Posterior cingulate gyrus (tissue), 11 donors: ENCODE measurements at regions of chr13 and their contacts with region 1.

Region 1: GRCh38 chr13:52128714-52129700 is at the start of gene NEK5:
- DNase-seq: peak; percentile 21 to 93 (median 55)

Region 2: GRCh38 chr13:51814825-51815650 is 314.0 kb before region 1 on chr13:
- intact Hi-C with region 1: loop called (anchors 5 kb)
- DNase-seq: peak in 6 of 10 donors; percentile 23 to 81 (median 64)

Region 3: GRCh38 chr13:51844862-51845573 is 284.0 kb before region 1 on chr13 and contains the start of gene TMEM272:
- intact Hi-C with region 1: loop called (anchors 5 kb)
- DNase-seq: peak in 9 of 10 donors; percentile 46 to 93 (median 65)

Region 4: DNA sequence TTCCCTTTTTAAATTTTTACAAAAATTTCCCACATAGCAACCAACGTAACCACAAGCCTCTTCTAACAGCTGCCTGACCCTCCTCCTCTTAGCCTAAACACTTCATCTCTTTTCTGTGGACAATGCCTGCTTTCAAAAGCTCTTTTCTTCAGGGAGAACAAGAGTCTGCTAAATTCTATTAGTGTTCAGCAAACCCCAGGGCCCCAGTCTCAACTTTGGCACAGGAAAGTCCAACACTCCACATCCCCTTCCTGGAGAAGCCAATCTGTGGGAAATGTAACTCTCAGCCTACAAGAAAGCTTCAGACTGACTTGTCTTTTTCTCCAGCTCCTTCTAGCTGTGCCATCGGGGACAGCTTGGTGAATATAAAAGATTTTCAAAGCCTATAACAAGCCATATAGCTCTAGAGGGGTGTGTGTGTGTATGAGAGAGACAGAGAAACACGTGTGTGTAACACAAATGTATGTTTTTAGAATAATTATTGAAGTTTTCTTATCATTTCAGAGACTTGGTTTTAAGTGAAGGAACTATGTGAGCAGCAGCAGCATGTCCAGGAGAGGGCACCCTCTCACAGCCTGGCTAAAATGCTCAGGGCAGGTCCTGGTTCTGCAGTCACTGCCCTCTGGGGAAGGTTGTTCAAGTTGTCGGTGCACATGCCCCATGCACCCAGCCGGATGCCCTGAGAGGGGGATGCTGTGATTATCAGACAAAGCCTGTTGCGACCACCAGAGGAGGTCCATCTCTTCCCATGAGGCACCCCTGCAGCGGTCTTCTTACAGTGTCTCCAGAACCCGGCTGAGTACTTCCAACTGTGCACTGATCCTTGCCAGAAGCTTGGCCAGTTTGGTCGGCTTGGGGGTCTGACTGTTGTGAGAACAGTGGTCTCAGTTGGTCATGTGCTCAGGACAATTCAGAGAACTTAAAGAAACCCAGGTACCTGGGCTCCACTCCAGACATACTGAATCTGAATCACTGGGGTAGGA is 232.8 kb before region 1 on chr13:
- intact Hi-C with region 1: loop called (anchors 2 kb)
- DNase-seq: peak in 8 of 10 donors; percentile 43 to 94 (median 57)

Region 5: GRCh38 chr13:52001120-52001731 is 127.8 kb before region 1 on chr13:
- intact Hi-C with region 1: loop called (anchors 1 kb)
- DNase-seq: no peak

Region 6: DNA sequence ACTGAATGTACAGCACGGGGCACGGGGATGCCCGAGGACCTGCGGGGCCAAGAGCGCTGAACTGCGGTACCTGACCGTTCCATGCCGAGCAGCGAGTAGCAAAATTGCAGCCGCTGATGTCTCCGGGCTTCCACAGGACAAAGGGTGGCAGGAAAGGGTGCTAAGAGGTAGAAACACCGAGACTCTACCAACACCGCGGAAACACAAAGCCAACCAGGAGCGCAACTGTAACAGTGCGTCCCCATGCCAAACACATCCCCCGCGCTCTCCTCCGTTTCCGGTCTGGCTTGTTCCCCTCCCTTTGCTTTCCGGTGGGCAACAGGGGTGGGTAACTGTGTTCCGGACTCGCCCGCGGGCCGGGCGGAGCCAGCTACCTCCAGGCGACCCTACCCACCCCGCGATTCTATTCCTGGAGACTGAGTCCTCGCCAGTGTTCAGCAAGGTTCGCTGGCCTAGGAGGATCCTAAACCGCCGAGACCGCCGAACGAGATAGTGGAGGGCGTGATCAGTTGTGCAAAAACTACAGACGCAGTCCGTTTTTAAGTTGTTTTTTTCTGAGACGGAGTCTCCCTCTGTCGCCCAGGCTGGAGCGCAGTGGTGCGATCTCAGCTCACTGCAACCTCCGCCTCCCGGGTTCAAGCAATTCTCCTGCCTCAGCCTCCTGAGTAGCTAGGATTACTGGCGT is 65.3 kb after region 1 on chr13:
- intact Hi-C with region 1: loop called (anchors 2 kb)
- DNase-seq: peak; percentile 83 to 98 (median 88)

Region 7: DNA sequence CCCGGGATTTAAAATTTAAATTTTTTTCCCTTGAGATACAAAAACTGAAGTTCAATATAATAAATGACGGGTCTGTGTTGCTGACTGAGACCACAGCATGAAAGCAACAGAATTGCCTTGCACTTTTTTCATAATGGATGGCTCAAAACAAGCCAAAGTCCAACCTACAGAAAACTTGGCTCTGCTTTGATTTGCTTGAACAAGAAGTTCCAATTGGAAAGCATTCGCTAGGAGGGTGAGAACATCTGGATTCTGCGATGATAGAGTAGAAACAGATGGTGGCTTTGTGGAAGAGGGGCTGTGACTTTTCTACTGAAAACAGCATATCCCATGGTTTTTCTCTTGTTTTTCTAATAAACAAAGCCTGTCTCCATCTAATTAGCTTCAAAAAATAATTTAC is 230.5 kb after region 1 on chr13:
- intact Hi-C with region 1: no loop called
- DNase-seq: no peak